Right ventricle myocardium inferior (tissue), 1 donor: ENCODE measurements at regions of chr3 and their contacts with region 1.

Region 1: DNA sequence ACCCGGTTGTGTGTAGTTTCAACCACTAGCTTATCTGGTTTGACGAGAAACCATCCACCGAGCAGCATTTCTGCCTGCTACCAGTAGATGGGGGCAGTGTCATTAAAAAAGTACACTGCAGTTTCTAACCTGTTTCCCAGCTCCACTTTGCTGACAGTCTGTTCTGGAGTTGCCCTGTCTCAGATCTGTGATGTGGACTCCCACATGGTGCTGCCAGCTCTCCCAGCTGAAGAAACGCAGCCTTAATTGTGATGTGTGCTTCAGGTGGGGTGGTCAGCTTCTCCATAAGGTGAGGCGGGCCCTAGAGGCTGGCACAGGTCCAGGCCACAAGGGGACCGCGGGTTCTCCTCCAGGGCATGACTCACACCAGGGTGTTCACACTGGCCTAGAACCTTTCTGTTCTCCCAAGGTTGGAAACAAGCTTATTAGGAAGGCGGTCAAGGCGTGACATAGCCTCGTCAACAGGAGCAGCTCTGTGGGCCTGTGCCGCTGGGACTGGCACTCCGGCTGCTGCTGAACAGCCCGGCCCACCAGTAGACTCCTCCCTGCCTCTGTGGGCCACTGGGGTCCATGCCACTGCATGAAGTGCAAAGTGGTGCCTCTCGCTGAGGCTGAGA is 2.9 kb upstream of the FAM43A start:
- DNase-seq: no peak
- ATAC-seq: peak; percentile 64

Region 2: GRCh38 chr3:194224471-194225415 is 458.1 kb before region 1 on chr3:
- intact Hi-C with region 1: no loop called
- DNase-seq: no peak
- ATAC-seq: no peak

Region 3: DNA sequence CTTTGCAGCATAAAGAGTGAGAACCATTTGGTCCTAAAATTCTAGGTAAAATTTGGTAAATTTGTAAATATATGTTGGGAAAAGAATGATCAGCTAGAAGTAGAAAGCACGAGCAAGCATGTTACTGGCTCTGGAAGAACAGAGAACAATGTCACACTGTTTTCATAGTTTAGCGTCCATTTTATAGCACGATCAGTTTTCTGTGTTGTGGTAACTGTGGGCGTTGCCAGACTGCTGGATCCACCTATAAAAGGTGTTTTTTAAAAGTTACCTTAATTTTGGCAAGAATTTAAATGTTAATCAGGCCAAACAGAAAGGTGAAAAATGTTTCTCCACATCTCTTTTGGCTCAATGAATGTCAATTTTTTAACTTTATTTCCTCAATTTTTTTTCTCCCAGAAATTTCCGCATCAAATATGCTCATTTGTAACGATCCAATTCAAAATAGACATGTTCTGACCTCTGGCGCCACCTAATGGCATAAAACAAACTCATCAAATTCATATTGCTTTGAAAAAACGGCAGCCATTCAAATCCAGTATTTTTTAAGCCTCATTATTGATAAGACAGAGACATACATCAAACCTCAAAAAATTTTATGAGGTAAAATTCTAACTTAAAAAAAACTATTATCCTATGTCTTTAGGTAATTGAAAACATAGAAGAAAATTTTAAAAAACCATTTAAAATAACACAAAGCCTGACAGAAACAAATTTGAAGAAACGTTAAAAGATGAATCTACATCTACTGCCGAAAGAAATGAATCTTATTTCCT is 278.2 kb before region 1 on chr3:
- intact Hi-C with region 1: no loop called
- DNase-seq: no peak
- ATAC-seq: no peak

Region 4: GRCh38 chr3:194640829-194641228 is 42.0 kb before region 1 on chr3:
- intact Hi-C with region 1: no loop called
- DNase-seq: no peak
- ATAC-seq: no peak

Region 5: DNA sequence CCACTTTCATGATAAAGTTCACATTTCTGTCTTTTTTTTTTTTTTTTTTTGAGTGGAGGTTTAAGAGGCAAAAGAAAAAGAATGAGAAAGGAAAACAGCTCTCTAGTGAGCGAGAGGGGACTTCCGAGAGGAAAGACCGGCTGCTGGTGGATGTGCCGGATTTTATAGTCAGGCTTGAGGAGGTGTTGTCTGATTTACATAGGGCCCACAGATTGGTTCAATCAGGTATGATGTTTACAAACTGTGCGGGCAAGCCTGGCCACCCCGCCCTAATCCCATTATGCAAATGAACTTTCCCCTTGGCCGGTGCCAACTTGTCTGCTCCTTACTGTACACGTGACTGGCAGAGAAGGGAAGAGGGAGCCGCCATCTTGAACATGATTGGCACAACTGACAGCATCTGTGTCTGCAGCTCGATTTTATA is 47.5 kb after region 1 on chr3:
- intact Hi-C with region 1: no loop called
- DNase-seq: no peak
- ATAC-seq: no peak

Region 6: DNA sequence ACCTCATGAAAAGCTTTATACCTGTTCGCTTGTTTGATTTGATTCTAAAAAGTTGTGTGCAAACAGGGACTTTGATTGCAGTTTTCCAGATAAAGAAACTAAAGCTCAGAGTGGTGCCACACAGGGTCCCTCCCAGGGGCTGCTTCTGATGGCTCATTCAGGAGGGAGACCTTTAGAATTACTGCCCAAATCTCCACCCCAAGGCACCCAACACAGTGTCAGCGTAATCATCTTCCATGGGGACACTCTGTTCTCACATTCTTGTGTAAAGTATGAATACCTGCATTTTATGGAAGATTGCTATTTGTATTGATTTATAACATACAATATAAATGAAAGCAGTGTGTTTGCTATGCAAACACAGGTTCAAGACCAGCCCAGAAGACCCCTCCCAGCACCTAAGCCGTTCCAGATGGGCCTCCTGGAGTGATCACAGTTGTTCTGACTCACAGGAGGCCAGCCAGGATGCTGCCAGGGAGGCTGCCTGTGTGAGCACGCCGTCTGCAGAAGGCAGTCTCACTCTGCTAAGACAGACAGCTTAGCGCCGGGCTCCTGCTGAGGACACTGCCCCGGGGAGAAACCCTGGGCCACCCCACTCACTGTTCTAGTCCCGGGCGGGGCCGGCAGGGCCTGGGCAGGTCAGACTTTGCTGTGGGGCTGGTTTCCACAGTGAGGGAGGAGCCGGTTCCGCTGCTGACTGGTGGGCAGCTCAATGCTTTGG is 188.5 kb after region 1 on chr3:
- intact Hi-C with region 1: loop called (anchors 2 kb)
- DNase-seq: peak; percentile 81
- ATAC-seq: peak; percentile 72

Region 7: DNA sequence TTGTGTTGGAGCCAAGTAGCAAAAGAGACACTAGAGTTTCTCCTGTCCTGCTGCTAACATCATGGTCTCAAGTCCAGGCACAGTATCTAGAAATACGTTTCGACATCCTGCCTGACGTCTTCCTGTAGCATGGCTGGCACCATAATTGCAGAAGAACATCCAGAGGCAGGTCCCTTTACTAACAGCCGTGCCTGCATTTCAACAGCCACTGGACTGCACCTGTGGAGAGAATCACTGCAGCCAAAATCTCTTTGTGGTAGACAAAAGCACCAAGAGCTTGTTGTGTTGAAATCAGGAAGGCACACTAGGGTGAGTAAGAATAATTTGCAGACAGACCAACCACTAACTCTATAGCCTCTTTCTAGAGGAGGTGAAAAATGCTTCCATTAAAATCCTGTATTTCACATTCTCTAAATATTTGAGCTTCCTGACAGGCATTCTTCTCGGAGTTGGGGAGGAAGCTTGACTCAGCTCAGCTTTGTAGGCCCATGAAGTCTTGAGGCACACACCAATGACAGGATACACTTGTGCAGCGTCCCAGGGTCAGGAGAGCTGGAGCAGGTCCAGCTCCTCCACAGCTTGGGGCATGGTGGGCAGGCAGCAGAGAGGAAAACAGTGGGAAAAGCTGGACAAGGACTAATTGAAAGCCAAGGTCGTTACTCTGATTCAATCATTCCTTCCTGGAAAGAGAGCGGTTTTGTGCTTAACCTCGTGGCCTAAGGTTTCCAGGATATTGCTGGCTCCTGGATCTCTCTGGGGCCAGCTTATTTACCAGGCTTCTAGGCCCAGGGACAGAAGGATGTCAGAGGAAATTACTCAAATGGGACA is 247.8 kb after region 1 on chr3:
- intact Hi-C with region 1: loop called (anchors 5 kb)
- DNase-seq: no peak
- ATAC-seq: peak; percentile 78

Region 8: DNA sequence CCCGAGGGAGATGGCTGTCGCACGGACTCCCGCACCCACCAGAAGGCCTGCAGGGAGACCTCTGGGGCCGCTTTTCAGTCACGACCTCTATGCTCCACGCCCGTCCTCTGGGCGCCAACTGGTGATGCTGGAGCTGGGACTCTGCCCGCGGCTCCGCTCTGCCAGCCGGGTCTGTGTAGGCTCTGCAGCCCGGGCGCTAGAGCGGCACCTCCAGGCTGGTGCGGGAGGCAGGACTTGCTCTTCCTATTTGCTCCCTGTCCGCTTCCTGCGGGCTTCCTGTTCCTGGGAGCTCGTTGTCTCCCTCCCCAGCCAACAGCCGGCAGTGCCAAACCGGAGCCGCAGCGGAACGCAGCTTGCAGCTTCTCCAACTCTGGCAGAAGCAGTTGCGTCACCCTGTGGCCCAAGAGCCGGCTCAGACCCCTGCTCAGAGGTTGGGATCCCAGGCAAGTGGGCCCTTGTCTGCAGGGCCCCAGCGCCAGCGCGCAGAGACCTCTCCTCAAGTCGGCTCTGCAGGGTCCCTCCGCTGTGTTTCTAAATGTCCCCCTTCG is 302.3 kb after region 1 on chr3:
- intact Hi-C with region 1: loop called (anchors 10 kb)
- DNase-seq: peak; percentile 83
- ATAC-seq: peak; percentile 92

Region 9: GRCh38 chr3:195106418-195106906 is 423.7 kb after region 1 on chr3:
- intact Hi-C with region 1: loop called (anchors 1 kb)
- DNase-seq: peak; percentile 90
- ATAC-seq: peak; percentile 75